PC-3 (cell line): ENCODE measurements at regions of chrX and their contacts with region 1.

Region 1: GRCh38 chrX:11341274-11342201 is 48.3 kb downstream of the AMELX start:
- DNase-seq: peak; percentile 88
- ATAC-seq: peak; percentile 88
- H3K4me3 ChIP-seq: no peak overlapping the region
- H3K27ac ChIP-seq: peak overlapping the region; percentile 95
- H3K4me1 ChIP-seq: peaks cover 20% of the 10 kb centered on the region
- H3K27me3 ChIP-seq: no peaks in the 10 kb centered on the region
- CTCF ChIP-seq: no peak

Region 2: GRCh38 chrX:11143931-11144678 is 197.4 kb before region 1 on chrX:
- CTCF ChIA-PET with region 1: no interaction called
- POLR2A ChIA-PET with region 1: no interaction called
- intact Hi-C with region 1: loop called (anchors 10 kb)
- DNase-seq: peak; percentile 91
- ATAC-seq: peak; percentile 88
- H3K4me3 ChIP-seq: peak overlapping the region; percentile 35; the same call in 1 of the 2 replicates
- H3K27ac ChIP-seq: no peak overlapping the region
- H3K4me1 ChIP-seq: no peaks in the 10 kb centered on the region
- H3K27me3 ChIP-seq: no peaks in the 10 kb centered on the region
- CTCF ChIP-seq: peak; percentile 68

Region 3: GRCh38 chrX:11188664-11189063 is 152.9 kb before region 1 on chrX:
- CTCF ChIA-PET with region 1: no interaction called
- POLR2A ChIA-PET with region 1: no interaction called
- intact Hi-C with region 1: loop called (anchors 10 kb)
- DNase-seq: peak; percentile 85
- ATAC-seq: peak; percentile 92
- H3K4me3 ChIP-seq: no peak overlapping the region
- H3K27ac ChIP-seq: peak overlapping the region; percentile 38
- H3K4me1 ChIP-seq: peaks cover 45% of the 10 kb centered on the region
- H3K27me3 ChIP-seq: no peaks in the 10 kb centered on the region
- CTCF ChIP-seq: no peak

Region 4: GRCh38 chrX:11375614-11376119 is 34.1 kb after region 1 on chrX:
- CTCF ChIA-PET with region 1: no interaction called
- POLR2A ChIA-PET with region 1: no interaction called
- intact Hi-C with region 1: loop called (anchors 2 kb)
- DNase-seq: no peak
- ATAC-seq: no peak
- H3K4me3 ChIP-seq: no peak overlapping the region
- H3K27ac ChIP-seq: peak overlapping the region; percentile 77
- H3K4me1 ChIP-seq: peaks cover 38% of the 10 kb centered on the region
- H3K27me3 ChIP-seq: no peaks in the 10 kb centered on the region
- CTCF ChIP-seq: no peak

Region 5: GRCh38 chrX:11423362-11423818 is 81.9 kb after region 1 on chrX:
- CTCF ChIA-PET with region 1: no interaction called
- POLR2A ChIA-PET with region 1: no interaction called
- intact Hi-C with region 1: loop called (anchors 10 kb)
- DNase-seq: peak; percentile 51
- ATAC-seq: no peak
- H3K4me3 ChIP-seq: no peak overlapping the region
- H3K27ac ChIP-seq: no peak overlapping the region
- H3K4me1 ChIP-seq: peaks cover 23% of the 10 kb centered on the region
- H3K27me3 ChIP-seq: no peaks in the 10 kb centered on the region
- CTCF ChIP-seq: no peak

Region 6: GRCh38 chrX:11461201-11462001 is 119.9 kb after region 1 on chrX:
- CTCF ChIA-PET with region 1: no interaction called
- POLR2A ChIA-PET with region 1: no interaction called
- intact Hi-C with region 1: loop called (anchors 1 kb)
- DNase-seq: no peak
- ATAC-seq: no peak
- H3K4me3 ChIP-seq: no peak overlapping the region
- H3K27ac ChIP-seq: no peak overlapping the region
- H3K4me1 ChIP-seq: peaks cover 24% of the 10 kb centered on the region
- H3K27me3 ChIP-seq: no peaks in the 10 kb centered on the region
- CTCF ChIP-seq: no peak